OCI-LY7 (cell line): ENCODE measurements at regions of chr1 and their contacts with region 1.

Region 1: DNA sequence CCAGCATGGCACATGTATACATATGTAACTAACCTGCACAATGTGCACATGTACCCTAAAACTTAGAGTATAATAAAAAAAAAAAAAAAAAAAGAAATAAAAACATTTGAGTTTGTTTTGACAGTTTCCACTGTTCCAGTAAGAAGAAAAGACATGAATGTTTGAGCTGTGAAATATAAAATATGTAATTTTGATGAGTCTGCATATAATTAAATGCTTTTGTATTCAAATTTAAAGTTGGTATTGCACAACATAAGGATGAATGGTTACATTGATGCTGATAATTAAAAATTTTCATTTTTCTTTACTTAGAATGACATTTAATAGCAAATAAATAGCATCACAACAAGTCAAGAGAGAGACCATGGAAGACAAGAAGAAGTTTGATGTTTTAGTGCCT is 212.0 kb upstream of the RRP15 start:
- DNase-seq: no peak
- H3K4me3 ChIP-seq: no peak overlapping the region
- H3K27ac ChIP-seq: no peak overlapping the region
- H3K4me1 ChIP-seq: no peaks in the 10 kb centered on the region
- CTCF ChIP-seq: no peak

Region 2: DNA sequence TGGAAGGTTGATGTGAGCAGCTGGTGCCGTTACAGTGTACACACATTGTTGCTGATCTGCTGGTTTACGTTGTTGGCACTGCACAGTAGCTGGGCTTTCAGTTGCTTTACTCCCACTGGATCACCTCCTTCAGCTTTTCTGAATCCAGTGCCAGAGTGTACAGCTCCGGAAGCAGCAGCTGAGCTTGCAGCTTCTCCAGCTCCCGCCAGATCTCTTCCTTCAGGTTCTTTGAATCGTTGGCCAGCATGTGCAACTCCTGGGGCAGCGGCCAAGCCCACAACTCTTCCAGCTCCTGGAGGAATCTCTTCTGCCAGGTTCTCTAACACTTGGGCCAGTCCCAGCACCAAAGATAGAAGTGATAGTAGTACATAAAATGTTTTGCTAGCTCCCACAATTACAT is 62.3 kb after region 1 on chr1:
- CTCF ChIA-PET with region 1: no interaction called
- POLR2A ChIA-PET with region 1: no interaction called
- intact Hi-C with region 1: no loop called
- DNase-seq: no peak
- H3K4me3 ChIP-seq: no peak overlapping the region
- H3K27ac ChIP-seq: no peak overlapping the region
- H3K4me1 ChIP-seq: no peaks in the 10 kb centered on the region
- CTCF ChIP-seq: no peak

Region 3: GRCh38 chr1:218476380-218476779 is 403.3 kb after region 1 on chr1:
- CTCF ChIA-PET with region 1: no interaction called
- POLR2A ChIA-PET with region 1: no interaction called
- intact Hi-C with region 1: loop called (anchors 5 kb)
- DNase-seq: no peak
- H3K4me3 ChIP-seq: no peak overlapping the region
- H3K27ac ChIP-seq: no peak overlapping the region
- H3K4me1 ChIP-seq: no peaks in the 10 kb centered on the region
- CTCF ChIP-seq: no peak